ENCODE measurements at regions of chr21 and their contacts with region 1.

Region 1: DNA sequence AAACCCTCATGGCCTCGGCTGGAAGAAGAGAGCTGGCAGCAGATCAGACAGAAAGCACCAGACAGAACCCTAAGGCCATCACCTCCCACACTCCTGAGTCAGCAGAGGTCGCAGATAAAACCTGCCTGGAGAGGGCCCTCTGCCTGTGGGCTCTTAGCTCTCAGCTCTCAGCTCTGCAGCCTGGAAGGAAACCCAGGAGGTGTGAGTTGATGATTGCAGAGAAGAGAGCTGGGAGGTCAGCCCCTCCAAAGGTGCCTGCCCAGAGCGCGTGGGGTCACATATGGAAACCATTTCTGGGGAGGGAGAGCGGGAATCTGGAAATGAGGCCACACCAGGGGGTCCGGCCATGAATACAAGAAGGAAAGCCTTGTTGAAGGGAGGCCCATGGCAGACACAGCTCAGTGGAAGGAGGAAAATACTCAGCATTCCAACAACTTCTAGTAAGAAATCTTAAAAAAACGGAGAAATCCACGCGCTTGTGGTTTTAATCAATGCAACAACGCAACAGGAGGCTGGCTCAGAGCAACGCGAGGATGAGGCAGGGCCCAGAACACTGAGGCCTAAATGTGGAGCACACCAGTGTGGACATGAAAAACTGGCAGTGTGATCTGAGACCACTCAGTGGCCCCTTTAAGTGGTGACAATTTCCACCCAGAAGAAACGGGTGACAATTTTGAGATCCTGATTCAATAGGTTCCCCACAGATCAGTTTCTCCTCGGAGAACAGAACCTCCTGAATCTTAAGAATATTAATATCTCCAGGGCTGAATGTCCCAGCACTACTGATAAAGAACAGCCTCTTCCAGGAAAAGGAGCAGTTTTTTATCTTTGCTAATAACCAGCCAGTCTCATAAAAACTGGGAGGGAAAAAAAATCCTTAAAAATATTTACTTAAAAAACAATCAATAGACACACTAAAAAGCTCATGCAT is 45.7 kb downstream of the PSMG1 start:
- DNase-seq: peak; percentile 28 to 56
- ATAC-seq: peak; percentile 70 to 78; a peak in 4 of 6 replicates
- H3K4me3 ChIP-seq: no peak overlapping the region
- H3K27ac ChIP-seq: peak overlapping the region; percentile 45 to 83
- H3K4me1 ChIP-seq: peaks cover 17% of the 10 kb centered on the region
- CTCF ChIP-seq: no peak
- EP300 ChIP-seq: no peak
- POLR2A ChIP-seq: no peak
- RAD21 ChIP-seq: peak in 1 of 2 experiments; percentile 12; a peak in 1 of 5 replicates

Region 2: GRCh38 chr21:38505654-38506515 is 631.6 kb before region 1 on chr21:
- CTCF ChIA-PET with region 1: interaction called, 11 read pairs
- POLR2A ChIA-PET with region 1: no interaction called
- DNase-seq: peak; percentile 6 to 56
- ATAC-seq: peak; percentile 82 to 90; a peak in 5 of 6 replicates
- H3K4me3 ChIP-seq: no peak overlapping the region
- H3K27ac ChIP-seq: no peak overlapping the region
- H3K4me1 ChIP-seq: 0 out of 3 replicates have a peak, but pooled peaks cover 5% of the 10 kb centered on the region
- CTCF ChIP-seq: peak; percentile 68
- EP300 ChIP-seq: no peak
- POLR2A ChIP-seq: no peak
- RAD21 ChIP-seq: peak; percentile 74 to 75

Region 3: DNA sequence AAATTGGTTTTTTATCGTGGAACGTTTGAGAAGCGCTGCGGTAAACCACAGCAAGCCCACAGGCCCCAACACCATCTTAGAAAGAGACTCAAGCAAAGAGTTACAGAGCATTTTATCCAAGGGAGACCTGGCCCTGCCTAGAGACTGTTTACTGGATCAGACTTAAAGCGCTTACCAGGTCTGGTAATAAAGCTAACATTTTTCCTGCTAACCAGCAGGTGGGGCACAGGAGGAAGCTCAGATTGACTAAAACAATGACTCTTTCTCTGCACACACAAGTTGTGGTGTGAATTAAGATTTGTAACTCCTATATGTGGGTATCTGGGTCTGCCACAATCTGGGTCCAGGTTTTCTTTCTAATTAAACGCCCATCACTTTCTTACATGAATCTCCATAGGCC is 468.3 kb before region 1 on chr21:
- CTCF ChIA-PET with region 1: interaction called, 27 read pairs
- POLR2A ChIA-PET with region 1: no interaction called
- DNase-seq: peak; percentile 10 to 47
- ATAC-seq: peak; percentile 56 to 73; a peak in 3 of 6 replicates
- H3K4me3 ChIP-seq: no peak overlapping the region
- H3K27ac ChIP-seq: no peak overlapping the region
- H3K4me1 ChIP-seq: no peaks in the 10 kb centered on the region
- CTCF ChIP-seq: peak; percentile 37; the same call in 2 of the 3 replicates
- EP300 ChIP-seq: no peak
- POLR2A ChIP-seq: no peak
- RAD21 ChIP-seq: peak; percentile 28 to 30; a peak in 3 of 5 replicates

Region 4: GRCh38 chr21:38733973-38734546 is 403.5 kb before region 1 on chr21:
- CTCF ChIA-PET with region 1: interaction called, 18 read pairs
- POLR2A ChIA-PET with region 1: no interaction called
- DNase-seq: peak; percentile 47 to 71
- ATAC-seq: peak; percentile 74 to 91; a peak in 5 of 6 replicates
- H3K4me3 ChIP-seq: no peak overlapping the region
- H3K27ac ChIP-seq: peak overlapping the region; percentile 61 to 65
- H3K4me1 ChIP-seq: peaks cover 7% of the 10 kb centered on the region; the same call in 2 of the 3 replicates
- CTCF ChIP-seq: peak; percentile 75
- EP300 ChIP-seq: no peak
- POLR2A ChIP-seq: no peak
- RAD21 ChIP-seq: peak; percentile 91 to 93

Region 5: GRCh38 chr21:38804623-38805327 is 332.7 kb before region 1 on chr21:
- CTCF ChIA-PET with region 1: interaction called, 13 read pairs
- POLR2A ChIA-PET with region 1: interaction called, 5 read pairs
- DNase-seq: peak in 1 of 2 experiments; percentile 69
- ATAC-seq: peak; percentile 69 to 71
- H3K4me3 ChIP-seq: peak overlapping the region; percentile 93
- H3K27ac ChIP-seq: peak overlapping the region; percentile 98 to 99
- H3K4me1 ChIP-seq: peaks cover 63% of the 10 kb centered on the region
- CTCF ChIP-seq: peak; percentile 51
- EP300 ChIP-seq: no peak
- POLR2A ChIP-seq: no peak
- RAD21 ChIP-seq: peak; percentile 44 to 64; a peak in 4 of 5 replicates

Region 6: DNA sequence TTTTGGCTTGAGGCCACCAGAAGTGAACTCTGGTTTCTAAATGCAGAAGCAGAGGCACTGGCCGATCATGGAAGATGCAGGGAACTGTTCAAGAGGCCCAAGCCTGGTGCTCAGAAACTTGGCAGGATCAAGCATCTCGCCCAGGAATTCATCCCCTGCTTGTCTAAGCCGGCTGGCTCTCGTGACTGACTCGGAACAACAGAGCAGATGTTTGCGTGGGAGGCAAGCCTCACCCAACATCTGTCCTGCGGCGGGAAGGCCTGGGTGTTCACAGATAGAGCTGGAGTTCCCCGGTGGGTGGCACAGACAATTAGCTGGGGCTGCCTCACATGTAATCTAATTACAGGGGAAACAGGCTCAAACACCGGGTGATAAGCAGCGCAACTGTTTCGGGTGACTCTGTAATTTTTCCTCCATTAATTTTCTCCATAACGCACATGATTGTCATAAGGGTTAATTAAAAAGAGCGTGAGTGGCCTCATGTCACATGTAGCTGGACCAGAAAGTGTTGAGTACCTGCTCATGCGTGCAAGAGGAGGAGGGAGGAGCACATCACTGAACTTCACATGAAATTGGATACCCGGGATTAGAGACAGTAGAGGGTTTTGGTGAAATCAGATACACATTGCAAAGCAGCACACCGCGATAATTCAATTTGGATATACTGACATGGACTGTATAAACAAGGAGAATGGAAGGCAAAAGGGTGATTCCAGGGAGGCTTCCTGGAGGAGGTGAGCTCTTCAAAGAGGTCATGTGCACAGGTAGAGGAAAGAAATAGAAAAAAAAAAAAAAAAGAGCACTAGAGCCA is 151.7 kb before region 1 on chr21:
- CTCF ChIA-PET with region 1: no interaction called
- POLR2A ChIA-PET with region 1: no interaction called
- DNase-seq: no peak
- ATAC-seq: no peak
- H3K4me3 ChIP-seq: no peak overlapping the region
- H3K27ac ChIP-seq: no peak overlapping the region
- H3K4me1 ChIP-seq: no peaks in the 10 kb centered on the region
- CTCF ChIP-seq: no peak
- EP300 ChIP-seq: no peak
- POLR2A ChIP-seq: no peak
- RAD21 ChIP-seq: no peak

Region 7: GRCh38 chr21:39125752-39126485 is 11.6 kb before region 1 on chr21:
- CTCF ChIA-PET with region 1: interaction called, 10 read pairs
- POLR2A ChIA-PET with region 1: no interaction called
- DNase-seq: peak in 1 of 2 experiments; percentile 59
- ATAC-seq: peak; percentile 82 to 87
- H3K4me3 ChIP-seq: no peak overlapping the region
- H3K27ac ChIP-seq: peak overlapping the region; percentile 30 to 60; a peak in 3 of 6 replicates
- H3K4me1 ChIP-seq: no peaks in the 10 kb centered on the region
- CTCF ChIP-seq: peak; percentile 45
- EP300 ChIP-seq: no peak
- POLR2A ChIP-seq: no peak
- RAD21 ChIP-seq: peak; percentile 71 to 73

Region 8: GRCh38 chr21:39319814-39320332 is 182.4 kb after region 1 on chr21:
- CTCF ChIA-PET with region 1: no interaction called
- POLR2A ChIA-PET with region 1: no interaction called
- DNase-seq: peak in 1 of 2 experiments; percentile 25
- ATAC-seq: peak in 1 of 2 experiments; percentile 48; a peak in 3 of 6 replicates
- H3K4me3 ChIP-seq: no peak overlapping the region
- H3K27ac ChIP-seq: 0 out of 6 replicates have a peak overlapping the region, but pooled peaks of 1 of the 2 experiments have one; percentile 24
- H3K4me1 ChIP-seq: peaks cover 31% of the 10 kb centered on the region
- CTCF ChIP-seq: no peak
- EP300 ChIP-seq: no peak
- POLR2A ChIP-seq: no peak
- RAD21 ChIP-seq: no peak

Region 9: GRCh38 chr21:39647476-39647875 is 510.0 kb after region 1 on chr21:
- CTCF ChIA-PET with region 1: no interaction called
- POLR2A ChIA-PET with region 1: no interaction called
- DNase-seq: no peak
- ATAC-seq: no peak
- H3K4me3 ChIP-seq: no peak overlapping the region
- H3K27ac ChIP-seq: no peak overlapping the region
- H3K4me1 ChIP-seq: peaks cover 6% of the 10 kb centered on the region; the same call in 2 of the 3 replicates
- CTCF ChIP-seq: no peak
- EP300 ChIP-seq: no peak
- POLR2A ChIP-seq: no peak
- RAD21 ChIP-seq: no peak

Measured in A549 (cell line).